ENCODE measurements at regions of chr6 and their contacts with region 1.

Region 1: DNA sequence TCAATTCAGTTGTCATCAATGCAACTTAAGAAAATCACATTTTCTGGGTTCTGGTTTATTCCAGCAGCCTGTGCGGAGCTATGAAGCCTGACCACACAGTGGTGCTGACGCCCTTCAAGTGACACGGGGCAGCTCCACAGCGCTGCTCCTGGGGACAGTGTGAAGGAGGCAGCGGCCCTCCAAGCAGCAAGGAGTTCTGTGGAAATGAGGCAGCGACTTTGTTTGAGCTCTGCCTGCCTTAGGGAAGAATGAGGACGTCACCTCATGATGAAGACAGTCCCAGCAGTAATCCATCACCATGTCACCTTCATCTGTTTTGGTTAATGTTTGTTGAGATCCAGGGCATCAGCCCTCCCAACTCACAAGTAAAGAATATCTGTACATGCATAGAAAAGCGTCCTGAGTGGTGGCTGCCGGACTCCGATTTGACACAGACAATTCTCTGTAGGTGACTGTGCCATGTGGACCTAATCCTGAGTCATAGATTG is 168.5 kb upstream of the UST start:
- DNase-seq: peak; percentile 24
- H3K4me3 ChIP-seq: no peak overlapping the region
- CTCF ChIP-seq: peak; percentile 90

Region 2: DNA sequence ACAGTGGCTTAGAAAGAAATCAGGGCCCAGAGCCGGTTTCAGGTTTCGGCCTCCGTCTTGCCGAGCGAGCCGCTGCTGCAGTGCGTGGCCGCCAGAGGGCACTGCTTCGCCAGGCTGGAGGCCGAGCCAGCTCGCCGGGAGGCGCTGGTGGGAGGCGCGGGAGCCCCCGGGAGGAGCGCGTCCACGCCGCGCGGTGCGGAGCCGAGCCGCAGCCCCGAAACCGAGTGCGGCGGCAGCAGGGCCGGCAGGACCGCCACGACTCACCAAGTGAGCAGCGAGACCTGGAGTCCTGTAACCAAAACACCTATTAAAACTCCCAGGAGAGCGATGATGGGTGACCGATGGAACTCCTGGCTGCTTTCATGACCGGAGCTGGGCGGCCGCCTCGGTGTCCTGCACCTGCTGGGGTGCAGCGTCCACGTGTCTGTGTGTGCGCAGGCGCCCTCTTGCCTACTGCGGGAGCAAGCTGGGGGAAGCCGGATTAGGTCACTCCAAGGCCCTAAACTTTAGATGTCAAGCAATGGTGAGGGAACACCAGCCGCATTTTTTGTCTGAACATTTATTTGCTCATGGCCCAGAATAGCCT is 18.3 kb before region 1 on chr6:
- CTCF ChIA-PET with region 1: interaction called, 18 read pairs
- POLR2A ChIA-PET with region 1: no interaction called
- DNase-seq: no peak
- H3K4me3 ChIP-seq: peak overlapping the region; percentile 59
- CTCF ChIP-seq: peak; percentile 98

Region 3: DNA sequence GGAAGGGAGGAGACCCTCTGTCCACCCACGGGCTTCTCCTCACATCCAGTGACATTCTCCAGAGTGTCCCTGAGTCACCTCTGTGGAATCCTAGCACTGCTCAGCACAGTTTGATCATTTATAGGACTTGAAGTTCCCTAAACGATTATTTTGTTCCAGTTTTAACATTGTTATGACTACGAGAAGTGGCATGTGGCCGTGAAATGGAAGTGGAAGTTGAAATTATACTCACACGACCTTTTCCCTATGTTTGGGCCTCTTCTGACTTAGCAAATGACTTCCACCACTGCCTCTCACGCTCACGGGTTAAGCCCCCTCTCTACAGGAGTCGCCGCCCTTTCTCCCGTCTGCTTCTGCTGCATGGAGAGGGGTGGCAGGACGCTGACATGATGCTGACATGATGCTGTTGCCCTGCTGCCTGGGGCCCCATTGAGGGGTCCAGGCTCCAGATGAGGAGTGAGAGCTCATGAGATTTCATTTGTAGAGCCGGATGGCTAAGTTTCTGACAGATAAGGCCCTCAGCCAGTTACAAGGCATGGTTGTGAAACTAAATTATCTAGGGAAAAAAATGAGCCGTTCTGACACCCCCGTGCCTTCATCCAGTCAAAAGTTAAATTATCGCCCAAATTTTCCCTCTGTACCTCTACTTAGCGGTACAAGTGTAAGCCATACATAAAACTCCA is 15.0 kb after region 1 on chr6:
- CTCF ChIA-PET with region 1: interaction called, 15 read pairs
- POLR2A ChIA-PET with region 1: no interaction called
- DNase-seq: no peak
- H3K4me3 ChIP-seq: no peak overlapping the region
- CTCF ChIP-seq: no peak

Region 4: GRCh38 chr6:148947621-148948444 is 369.5 kb after region 1 on chr6:
- CTCF ChIA-PET with region 1: interaction called, 39 read pairs
- POLR2A ChIA-PET with region 1: no interaction called
- DNase-seq: no peak
- H3K4me3 ChIP-seq: no peak overlapping the region
- CTCF ChIP-seq: peak; percentile 87

Region 5: DNA sequence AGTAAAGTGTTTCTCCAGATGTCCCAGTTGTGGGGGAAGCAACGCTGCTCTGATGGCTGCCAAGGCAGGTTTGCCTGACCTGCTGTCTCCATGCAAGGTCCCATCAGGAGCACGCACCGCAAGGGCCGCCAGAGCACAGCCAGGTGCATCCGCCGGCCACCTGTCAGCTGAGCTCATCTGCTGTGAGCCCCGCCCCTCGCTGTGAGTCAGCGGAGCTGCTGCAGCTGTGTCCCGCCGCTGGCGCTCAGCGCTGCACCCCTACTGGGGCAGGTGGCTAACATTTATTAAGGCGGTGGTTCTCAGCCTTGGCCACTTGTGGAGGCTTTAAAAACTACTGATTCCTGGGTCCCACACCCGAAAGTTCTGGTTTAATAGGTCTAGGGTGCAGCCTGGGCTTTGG is 394.2 kb after region 1 on chr6:
- CTCF ChIA-PET with region 1: interaction called, 44 read pairs
- POLR2A ChIA-PET with region 1: no interaction called
- DNase-seq: no peak
- H3K4me3 ChIP-seq: no peak overlapping the region
- CTCF ChIP-seq: no peak